ENCODE measurements at regions of chr15 and their contacts with region 1.

Region 1: GRCh38 chr15:52139599-52140491 is 27.3 kb upstream of the BCL2L10 start:
- DNase-seq: peak; percentile 50
- H3K4me3 ChIP-seq: no peak overlapping the region
- H3K27ac ChIP-seq: no peak overlapping the region
- H3K4me1 ChIP-seq: peaks cover 4% of the 10 kb centered on the region
- H3K27me3 ChIP-seq: no peaks in the 10 kb centered on the region
- CTCF ChIP-seq: peak; percentile 90 to 93

Region 2: DNA sequence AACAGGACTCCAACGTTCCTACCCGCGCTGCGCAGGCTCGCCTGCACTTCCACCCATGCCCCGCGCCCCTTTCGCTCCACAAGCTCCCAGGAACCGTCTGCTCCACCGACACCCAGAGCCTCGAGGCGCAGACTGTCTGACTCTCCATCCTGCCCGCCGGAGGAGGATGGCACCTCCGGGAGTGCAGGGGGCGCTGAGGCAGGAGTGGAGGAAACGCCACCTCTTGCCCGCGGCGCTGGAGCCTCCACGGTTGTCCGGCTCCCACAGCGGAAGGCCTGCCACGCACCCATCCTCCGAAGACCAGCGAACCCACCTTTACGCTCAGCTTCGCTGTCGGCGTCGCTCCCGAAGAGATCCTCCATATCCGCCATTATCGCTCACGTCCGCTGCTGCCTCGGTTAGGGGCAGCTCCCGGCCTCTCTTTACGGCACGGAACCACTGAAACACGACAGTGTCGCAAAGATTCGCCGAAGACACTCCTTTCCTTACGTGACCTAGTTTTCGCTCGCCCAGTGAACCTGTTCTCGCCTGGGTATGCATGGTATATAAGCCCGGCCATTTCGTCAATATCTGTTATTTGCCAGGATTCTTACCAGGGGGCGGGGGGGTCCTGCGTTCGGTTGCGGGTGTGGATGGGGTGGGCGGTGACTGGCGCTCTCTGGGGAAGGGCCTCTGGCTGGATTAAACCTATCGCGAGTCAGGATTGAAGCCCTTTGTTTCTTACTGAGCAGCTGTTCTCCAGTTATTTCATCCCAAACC is 168.3 kb before region 1 on chr15 and contains the start of gene LEO1:
- CTCF ChIA-PET with region 1: no interaction called
- dilution Hi-C with region 1: no loop called
- in situ Hi-C with region 1: loop called in 1 of 2 experiments (anchors 10 kb)
- intact Hi-C with region 1: no loop called
- DNase-seq: peak; percentile 95
- H3K4me3 ChIP-seq: peak within 1 kb of the TSS; percentile 71 to 90 (median 90)
- H3K27ac ChIP-seq: peak within 1 kb of the TSS; percentile 66
- H3K4me1 ChIP-seq: peaks cover 10% of the 10 kb centered on the region
- H3K27me3 ChIP-seq: no peaks in the 10 kb centered on the region
- CTCF ChIP-seq: peak; percentile 3 to 53
- total RNA-seq, gene LEO1: 11.3 to 25.5 TPM

Region 3: GRCh38 chr15:52093539-52094502 is 46.0 kb before region 1 on chr15:
- CTCF ChIA-PET with region 1: no interaction called
- dilution Hi-C with region 1: no loop called
- in situ Hi-C with region 1: no loop called
- intact Hi-C with region 1: loop called (anchors 5 kb)
- DNase-seq: peak; percentile 98
- H3K4me3 ChIP-seq: no peak overlapping the region
- H3K27ac ChIP-seq: peak overlapping the region; percentile 93
- H3K4me1 ChIP-seq: peaks cover 32% of the 10 kb centered on the region
- H3K27me3 ChIP-seq: no peaks in the 10 kb centered on the region
- CTCF ChIP-seq: no peak

Measured in mammary epithelial cell (primary cell).